ENCODE measurements at regions of chr19 and their contacts with region 1.

Region 1: DNA sequence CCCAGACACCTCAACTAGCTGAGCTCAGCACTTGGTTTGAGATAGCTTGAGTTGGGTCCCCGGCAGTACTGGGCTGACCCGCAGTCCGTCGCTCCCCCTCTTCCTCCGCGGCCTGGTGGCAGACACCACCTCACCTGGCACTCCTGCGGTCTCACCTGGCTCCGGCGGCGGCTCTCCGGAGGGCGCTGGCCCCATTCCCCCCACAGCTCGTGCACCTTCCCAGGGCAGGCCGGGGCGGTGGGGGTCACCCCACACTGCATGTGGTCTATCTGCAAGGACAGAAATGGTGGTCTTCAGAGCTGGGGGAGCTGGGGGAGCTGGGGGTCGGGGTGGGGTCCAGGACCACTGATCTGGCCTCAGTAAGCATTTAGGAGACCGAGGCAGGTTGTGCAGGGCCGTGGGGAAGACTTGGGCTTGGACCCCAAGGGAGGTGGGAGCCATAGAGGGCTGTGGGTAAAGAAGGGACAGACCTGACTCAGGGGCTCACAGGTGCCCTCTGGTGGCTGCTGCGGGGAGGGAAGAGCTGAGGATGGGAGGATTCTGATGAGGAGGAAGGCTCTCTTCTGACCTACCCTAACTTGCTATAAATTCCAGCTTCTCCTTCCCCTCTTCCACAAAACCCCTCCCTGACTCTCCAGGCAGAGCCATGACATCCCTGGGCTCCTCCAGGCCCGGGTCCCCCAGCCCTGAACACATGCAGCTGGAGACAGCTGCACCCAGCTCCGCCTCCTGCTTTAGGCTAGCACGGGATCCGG is 6.7 kb upstream of the PLIN4 start:
- DNase-seq: peak; percentile 77
- CTCF ChIP-seq: peak; percentile 78

Region 2: DNA sequence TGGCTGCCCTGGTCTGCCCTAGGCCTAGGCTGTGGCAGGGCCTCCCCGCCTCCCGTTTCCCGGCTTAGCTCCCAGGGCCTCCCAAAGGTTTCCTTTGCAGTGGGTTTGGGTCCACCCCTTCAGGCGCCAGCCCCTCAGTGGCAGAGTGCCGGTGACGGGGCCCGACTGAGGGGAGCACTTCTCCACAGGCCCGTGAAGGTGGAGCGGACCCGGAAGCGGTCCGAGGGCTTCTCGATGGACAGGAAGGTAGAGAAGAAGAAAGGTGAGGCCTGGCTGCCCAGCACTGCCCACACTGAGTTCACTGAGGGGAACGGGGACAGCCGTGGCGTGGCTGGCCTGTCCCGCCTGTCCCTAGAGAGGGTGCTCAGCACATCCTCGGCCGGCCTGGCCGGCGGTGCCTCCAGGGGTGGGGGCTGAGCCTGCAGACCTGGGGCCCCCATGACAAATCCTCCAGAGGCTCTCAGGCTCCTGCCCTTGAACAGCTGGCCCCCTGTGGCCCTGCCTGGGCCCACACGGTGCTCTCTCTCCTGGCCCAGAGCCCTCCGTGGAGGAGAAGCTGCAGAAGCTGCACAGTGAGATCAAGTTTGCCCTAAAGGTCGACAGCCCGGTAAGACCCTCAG is 27.1 kb before region 1 on chr19:
- CTCF ChIA-PET with region 1: interaction called, 15 read pairs
- POLR2A ChIA-PET with region 1: no interaction called
- DNase-seq: no peak
- CTCF ChIP-seq: no peak

Region 3: DNA sequence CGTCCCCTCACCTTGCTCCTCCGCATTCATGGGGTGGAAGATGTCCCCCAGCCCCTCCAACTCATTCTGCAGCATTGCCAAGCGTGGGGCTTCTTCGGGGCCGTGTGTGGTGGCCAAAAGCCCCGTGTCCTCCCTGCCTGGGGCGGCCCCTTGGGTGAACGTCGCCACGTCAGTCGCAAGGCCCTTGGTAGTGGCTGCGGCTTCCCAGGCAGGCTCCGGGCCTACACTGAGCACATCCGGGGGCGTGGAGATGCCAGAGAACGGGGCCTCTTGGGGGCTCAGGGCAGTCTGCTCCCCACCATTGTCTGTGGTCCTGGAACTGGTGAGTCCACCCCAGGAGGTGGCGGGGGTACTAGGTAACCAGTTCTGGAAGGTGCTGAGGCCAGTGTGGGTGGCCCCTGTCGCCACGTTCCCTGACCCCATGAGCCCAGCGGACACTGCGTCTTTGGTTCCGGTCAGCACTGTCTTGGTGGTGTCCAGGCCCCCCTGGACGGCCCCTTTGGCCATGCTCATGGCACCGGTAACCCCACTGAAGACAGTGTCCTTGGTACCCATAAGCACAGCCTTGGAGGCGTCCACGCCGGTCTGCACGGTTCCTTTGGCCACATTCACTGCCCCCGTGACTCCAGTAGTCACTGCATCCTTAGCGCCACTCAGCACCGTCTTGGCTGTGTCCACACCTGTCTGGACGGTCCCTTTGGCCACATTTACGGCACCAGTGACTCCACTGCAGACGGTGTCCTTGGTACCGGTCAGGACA is 14.4 kb before region 1 on chr19:
- CTCF ChIA-PET with region 1: interaction called, 31 read pairs
- POLR2A ChIA-PET with region 1: no interaction called
- DNase-seq: no peak
- CTCF ChIP-seq: no peak

Region 4: GRCh38 chr19:4534836-4535658 is 10.1 kb after region 1 on chr19 and contains the start of gene PLIN5:
- CTCF ChIA-PET with region 1: interaction called, 64 read pairs
- POLR2A ChIA-PET with region 1: no interaction called
- DNase-seq: peak; percentile 61
- CTCF ChIP-seq: no peak

Region 5: DNA sequence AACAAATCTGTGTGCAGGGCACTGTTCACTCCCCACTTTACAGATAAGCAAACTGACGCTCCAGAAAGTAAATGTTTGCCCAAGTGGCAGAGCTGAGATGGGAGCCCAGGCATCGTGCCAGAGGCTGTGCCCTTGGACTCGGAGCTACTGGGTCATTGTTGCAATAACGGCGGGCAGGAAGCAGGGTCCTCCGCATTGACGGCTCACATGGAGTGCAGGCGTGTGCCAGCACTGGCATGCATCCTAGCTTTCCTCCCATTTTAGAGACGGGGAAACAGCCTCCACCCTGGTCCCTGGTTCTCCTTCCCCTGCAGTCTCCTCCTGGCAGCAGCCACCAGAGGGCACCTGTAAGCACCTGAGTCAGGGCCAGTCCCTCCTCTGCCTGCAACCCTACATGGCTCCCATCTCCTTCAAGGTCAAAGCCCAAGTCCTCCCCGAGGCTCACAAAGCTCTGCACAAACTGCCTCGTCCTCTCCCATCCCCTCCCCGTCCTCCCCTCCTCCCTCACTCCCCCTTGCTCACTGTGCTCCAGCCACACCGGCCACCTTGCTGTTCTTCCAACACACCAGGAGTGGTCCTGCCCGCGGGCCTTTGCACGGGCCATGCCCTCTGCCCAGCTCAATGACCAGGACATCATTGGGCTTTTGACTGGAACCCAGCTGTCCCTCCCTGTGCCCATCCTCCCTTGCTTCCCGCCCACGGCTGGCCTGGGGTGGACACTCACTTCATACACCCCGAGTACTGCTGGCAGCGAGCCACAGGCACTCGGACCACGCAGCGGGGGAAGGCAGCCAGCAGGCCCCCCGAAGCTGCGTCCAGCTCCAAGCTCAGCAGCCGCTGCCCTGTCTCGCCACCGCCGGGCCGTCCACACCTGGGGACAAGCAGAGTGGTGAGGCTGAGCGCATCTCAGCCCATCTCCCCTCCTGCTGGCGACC is 22.6 kb after region 1 on chr19:
- CTCF ChIA-PET with region 1: interaction called, 35 read pairs
- POLR2A ChIA-PET with region 1: no interaction called
- DNase-seq: no peak
- CTCF ChIP-seq: peak; percentile 40

Region 6: GRCh38 chr19:4567584-4568071 is 42.6 kb after region 1 on chr19:
- CTCF ChIA-PET with region 1: interaction called, 25 read pairs
- POLR2A ChIA-PET with region 1: no interaction called
- DNase-seq: no peak
- CTCF ChIP-seq: peak; percentile 62

Region 7: DNA sequence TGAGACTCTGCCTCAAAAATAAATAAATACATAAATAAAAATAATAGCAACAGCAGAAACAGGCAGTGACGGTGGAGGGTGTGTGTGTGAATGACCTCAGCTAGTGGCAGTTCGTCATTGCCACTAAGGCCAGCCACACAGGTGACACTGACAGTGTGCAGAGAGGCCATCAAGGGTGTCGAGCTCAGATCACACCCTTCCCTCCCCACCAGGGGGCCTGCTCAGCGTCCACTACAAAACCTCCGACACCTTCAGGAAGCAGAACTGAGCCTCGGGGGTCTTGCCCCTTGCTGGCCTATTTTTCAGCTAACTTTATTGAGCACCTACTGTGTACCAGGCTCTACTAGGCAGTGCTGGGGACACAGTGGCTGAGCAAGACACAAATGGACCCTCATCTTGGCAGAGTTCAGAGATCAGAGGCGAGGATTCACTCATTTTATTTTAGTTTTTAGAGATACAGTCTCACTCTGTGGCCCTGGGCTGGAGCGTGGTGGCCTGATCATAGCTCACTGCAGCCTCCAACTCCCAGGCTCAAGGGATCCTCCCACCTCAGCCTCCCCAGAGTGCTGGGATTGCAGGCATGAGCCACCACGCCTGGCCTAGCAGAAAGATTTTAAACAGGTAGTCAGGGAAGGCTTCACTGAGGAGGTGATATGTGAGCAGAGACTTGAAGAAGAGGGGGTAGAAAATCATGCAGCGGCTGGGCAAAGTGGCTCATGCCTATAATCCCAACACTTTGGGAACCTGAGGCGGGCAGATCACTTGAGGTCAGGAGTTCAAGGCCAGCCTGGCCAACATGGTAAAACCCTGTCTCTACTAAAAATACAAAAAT is 64.8 kb after region 1 on chr19:
- CTCF ChIA-PET with region 1: interaction called, 13 read pairs
- POLR2A ChIA-PET with region 1: no interaction called
- DNase-seq: peak; percentile 70
- CTCF ChIP-seq: peak; percentile 50

Region 8: DNA sequence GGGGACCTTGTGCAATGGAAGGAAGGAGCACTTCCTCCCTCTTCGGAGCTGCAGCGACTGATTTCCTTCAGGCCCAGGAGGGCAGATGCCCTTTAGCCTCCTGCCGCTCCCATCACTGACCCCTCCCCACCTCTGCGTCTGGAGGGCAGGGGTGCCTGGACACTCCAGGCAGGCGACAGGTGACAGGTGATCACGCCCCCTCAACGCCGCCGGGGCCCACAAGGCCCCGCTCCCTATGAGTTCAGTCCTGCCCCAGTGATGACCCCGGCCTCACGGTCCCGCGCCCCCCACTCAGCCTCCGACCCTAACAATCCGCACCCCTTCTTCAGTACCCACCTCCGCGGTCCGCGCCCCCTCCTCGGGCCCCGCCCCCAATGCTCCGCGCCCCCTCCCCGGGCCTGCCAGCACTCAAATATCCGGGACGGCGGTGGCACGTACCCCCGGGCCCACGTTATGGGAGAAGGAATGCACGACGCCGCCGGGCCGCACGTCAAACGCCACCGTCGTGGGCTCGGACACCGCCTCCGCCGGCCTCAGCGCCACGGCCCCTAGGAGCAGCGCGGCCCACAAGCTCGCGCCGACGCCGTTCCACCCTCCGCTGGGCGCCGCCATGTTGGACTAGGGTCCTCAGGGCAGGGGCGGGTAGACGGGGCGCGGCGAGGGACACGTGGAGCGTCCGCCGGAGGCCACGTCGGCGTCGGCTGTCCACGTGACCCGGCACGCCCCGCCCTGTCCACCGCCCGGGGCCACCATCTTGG is 144.9 kb after region 1 on chr19 and contains the start of gene MYDGF:
- CTCF ChIA-PET with region 1: no interaction called
- POLR2A ChIA-PET with region 1: no interaction called
- DNase-seq: peak; percentile 100
- CTCF ChIP-seq: no peak